Sigmoid colon (tissue), 7 donors: ENCODE measurements at regions of chr1 and their contacts with region 1.

Region 1: GRCh38 chr1:39132505-39133339 is 71.8 kb upstream of the MACF1 start:
- DNase-seq: peak; percentile 79
- H3K4me3 ChIP-seq: no peak overlapping the region
- H3K27ac ChIP-seq: peak overlapping the region; percentile 59 to 80 (median 70)
- H3K4me1 ChIP-seq: peaks cover 0 to 79% (median 61%) of the 10 kb centered on the region in 4 donors
- H3K27me3 ChIP-seq: no peaks in the 10 kb centered on the region
- CTCF ChIP-seq: peak in 1 of 4 experiments; percentile 18
- EP300 ChIP-seq: no peak
- POLR2A ChIP-seq: no peak

Region 2: GRCh38 chr1:39081266-39082009 is 51.3 kb before region 1 on chr1:
- intact Hi-C with region 1: no loop called
- DNase-seq: no peak
- H3K4me3 ChIP-seq: peak overlapping the region; percentile 22 to 67 (median 56)
- H3K27ac ChIP-seq: peak overlapping the region in 2 of 4 donors; percentile 52 to 53
- H3K4me1 ChIP-seq: peaks cover 0 to 38% (median 29%) of the 10 kb centered on the region in 4 donors
- H3K27me3 ChIP-seq: peaks cover 0 to 29% (median 20%) of the 10 kb centered on the region in 3 donors
- CTCF ChIP-seq: no peak
- EP300 ChIP-seq: no peak
- POLR2A ChIP-seq: no peak

Region 3: DNA sequence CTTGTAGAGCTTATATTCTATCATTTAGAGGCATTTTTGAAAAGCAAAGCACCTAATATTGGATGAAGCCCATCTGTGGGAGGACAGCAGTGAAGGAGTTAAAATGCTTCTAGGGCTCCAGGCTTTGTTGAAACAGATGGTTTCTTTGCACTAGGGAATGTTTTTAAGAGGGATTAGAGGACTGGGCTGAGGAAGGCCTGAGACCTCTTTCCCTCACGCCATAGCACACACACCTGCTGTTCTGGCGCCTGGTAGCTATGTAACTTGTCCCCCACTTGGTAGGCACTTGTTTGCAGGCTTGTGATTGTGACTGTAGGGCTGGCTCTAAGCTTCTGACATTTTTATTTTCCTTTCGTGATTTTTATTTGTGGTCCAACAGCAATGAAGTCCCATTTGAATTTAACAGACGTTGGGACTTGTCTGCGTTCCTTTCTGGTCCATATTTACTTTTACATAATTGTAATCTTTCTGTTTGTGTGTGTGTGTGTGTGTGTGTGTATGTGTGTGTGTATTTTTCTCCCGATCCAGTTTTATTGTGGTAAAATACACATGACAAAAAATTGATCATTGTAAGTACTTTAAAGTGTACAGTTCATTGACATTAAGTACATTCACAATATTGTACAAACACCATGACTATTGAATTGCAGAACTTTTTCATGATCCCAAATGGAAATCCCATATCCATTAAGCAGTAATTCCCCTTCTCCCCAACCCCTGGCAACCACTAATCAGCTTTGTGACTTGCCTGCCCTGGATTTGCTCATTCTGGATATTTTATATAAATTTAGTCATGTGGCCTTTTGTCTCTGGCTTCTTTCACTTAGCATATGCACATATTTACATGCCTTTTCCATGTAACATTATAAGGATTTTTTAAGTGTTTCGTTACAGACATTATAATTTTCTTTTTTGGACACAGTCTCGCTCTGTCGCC is 38.3 kb after region 1 on chr1:
- intact Hi-C with region 1: loop called (anchors 5 kb)
- DNase-seq: no peak
- H3K4me3 ChIP-seq: no peak overlapping the region
- H3K27ac ChIP-seq: peak overlapping the region; percentile 72 to 86 (median 84)
- H3K4me1 ChIP-seq: peaks cover 0 to 90% (median 74%) of the 10 kb centered on the region in 4 donors
- H3K27me3 ChIP-seq: no peaks in the 10 kb centered on the region
- CTCF ChIP-seq: no peak
- EP300 ChIP-seq: no peak
- POLR2A ChIP-seq: no peak

Region 4: DNA sequence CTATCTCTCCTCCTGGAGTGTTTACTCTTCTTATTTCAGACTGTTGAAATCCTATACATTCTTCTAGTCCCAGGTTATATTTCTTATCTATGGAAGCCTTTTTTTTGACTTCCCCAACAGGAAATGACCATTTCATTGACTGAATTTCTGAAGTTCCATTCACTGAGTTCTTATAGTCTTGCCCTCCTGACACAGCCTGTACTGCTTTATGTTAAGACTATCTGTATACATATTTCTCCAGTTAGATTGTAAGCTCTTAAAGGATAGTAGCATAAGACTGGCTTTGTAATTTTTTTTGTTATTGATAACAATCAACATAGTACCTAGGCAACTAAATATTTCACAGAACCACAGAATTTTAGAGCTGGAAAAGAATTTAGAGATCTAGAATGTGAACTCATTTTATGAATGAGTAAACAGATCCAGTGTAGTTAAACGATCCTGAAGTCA is 56.9 kb after region 1 on chr1:
- intact Hi-C with region 1: loop called (anchors 2 kb)
- DNase-seq: no peak
- H3K4me3 ChIP-seq: no peak overlapping the region
- H3K27ac ChIP-seq: peak overlapping the region; percentile 83 to 95 (median 90)
- H3K4me1 ChIP-seq: peaks cover 0 to 78% (median 64%) of the 10 kb centered on the region in 4 donors
- H3K27me3 ChIP-seq: no peaks in the 10 kb centered on the region
- CTCF ChIP-seq: no peak
- EP300 ChIP-seq: no peak
- POLR2A ChIP-seq: no peak

Region 5: GRCh38 chr1:39666772-39667171 is 534.0 kb after region 1 on chr1:
- intact Hi-C with region 1: no loop called
- DNase-seq: no peak
- H3K4me3 ChIP-seq: no peak overlapping the region
- H3K27ac ChIP-seq: no peak overlapping the region
- H3K4me1 ChIP-seq: peaks cover 0 to 12% (median 9%) of the 10 kb centered on the region in 4 donors
- H3K27me3 ChIP-seq: peaks cover 0 to 52% (median 24%) of the 10 kb centered on the region in 3 donors
- CTCF ChIP-seq: no peak
- EP300 ChIP-seq: no peak
- POLR2A ChIP-seq: no peak